ENCODE measurements at regions of chr17 and their contacts with region 1.

Region 1: GRCh38 chr17:39653662-39654331 is 11.4 kb upstream of the TCAP start:
- DNase-seq: peak; percentile 93
- ATAC-seq: peak; percentile 46
- H3K4me3 Mint-ChIP-seq: no peak overlapping the region
- H3K27ac Mint-ChIP-seq: no peak overlapping the region; the same call in 1 of the 2 replicates
- H3K4me1 Mint-ChIP-seq: peaks cover 46% of the 10 kb centered on the region
- H3K27me3 Mint-ChIP-seq: no peaks in the 10 kb centered on the region
- CTCF ChIP-seq: peak; percentile 92

Region 2: GRCh38 chr17:39547713-39548478 is 105.9 kb before region 1 on chr17:
- CTCF ChIA-PET with region 1: interaction called, 13 read pairs
- POLR2A ChIA-PET with region 1: no interaction called
- DNase-seq: peak; percentile 88
- ATAC-seq: peak; percentile 91
- H3K4me3 Mint-ChIP-seq: no peak overlapping the region
- H3K27ac Mint-ChIP-seq: no peak overlapping the region; the same call in 1 of the 2 replicates
- H3K4me1 Mint-ChIP-seq: no peaks in the 10 kb centered on the region
- H3K27me3 Mint-ChIP-seq: no peaks in the 10 kb centered on the region; the same call in 1 of the 2 replicates
- CTCF ChIP-seq: peak; percentile 94

Region 3: GRCh38 chr17:39612291-39612894 is 41.4 kb before region 1 on chr17:
- CTCF ChIA-PET with region 1: interaction called, 851 read pairs
- POLR2A ChIA-PET with region 1: no interaction called
- DNase-seq: no peak
- ATAC-seq: no peak
- H3K4me3 Mint-ChIP-seq: no peak overlapping the region
- H3K27ac Mint-ChIP-seq: no peak overlapping the region
- H3K4me1 Mint-ChIP-seq: peaks cover 8% of the 10 kb centered on the region
- H3K27me3 Mint-ChIP-seq: peaks cover 91% of the 10 kb centered on the region
- CTCF ChIP-seq: no peak

Region 4: DNA sequence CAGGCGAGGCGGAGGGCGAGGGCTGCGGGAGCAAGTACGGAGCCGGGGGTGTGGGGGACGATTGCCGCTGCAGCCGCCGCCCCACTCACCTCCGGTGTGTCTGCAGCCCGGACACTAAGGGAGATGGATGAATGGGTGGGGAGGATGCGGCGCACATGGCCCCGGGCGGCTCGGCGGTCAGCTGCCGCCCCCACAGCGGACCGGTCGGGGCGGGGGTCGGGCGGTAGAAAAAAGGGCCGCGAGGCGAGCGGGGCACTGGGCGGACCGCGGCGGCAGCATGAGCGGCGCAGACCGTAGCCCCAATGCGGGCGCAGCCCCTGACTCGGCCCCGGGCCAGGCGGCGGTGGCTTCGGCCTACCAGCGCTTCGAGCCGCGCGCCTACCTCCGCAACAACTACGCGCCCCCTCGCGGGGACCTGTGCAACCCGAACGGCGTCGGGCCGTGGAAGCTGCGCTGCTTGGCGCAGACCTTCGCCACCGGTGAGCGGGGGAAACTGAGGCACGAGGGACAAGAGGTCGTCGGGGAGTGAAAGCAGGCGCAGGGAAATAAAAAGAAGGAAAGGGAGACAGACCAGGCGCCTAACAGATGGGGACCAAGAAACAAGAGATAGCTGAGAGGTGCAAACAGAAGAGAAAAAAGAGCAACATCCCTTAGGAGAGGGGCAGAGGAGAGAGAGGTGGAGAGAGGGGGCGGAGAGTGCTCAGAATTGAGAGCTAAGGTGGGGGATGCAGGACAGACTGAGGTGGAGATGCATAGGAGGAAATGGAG is 14.6 kb after region 1 on chr17 and contains the start of gene PNMT:
- CTCF ChIA-PET with region 1: interaction called, 272 read pairs
- POLR2A ChIA-PET with region 1: interaction called, 4 read pairs
- DNase-seq: peak; percentile 83
- ATAC-seq: peak; percentile 34
- H3K4me3 Mint-ChIP-seq: peak within 1 kb of the TSS; percentile 71
- H3K27ac Mint-ChIP-seq: no peak within 1 kb of the TSS
- H3K4me1 Mint-ChIP-seq: peaks cover 48% of the 10 kb centered on the region
- H3K27me3 Mint-ChIP-seq: peaks cover 47% of the 10 kb centered on the region
- CTCF ChIP-seq: peak; percentile 26; the same call in 1 of the 2 replicates
- total RNA-seq, gene PNMT: 2.4 to 3.1 TPM (median 2.7 TPM) in 3 replicates

Region 5: DNA sequence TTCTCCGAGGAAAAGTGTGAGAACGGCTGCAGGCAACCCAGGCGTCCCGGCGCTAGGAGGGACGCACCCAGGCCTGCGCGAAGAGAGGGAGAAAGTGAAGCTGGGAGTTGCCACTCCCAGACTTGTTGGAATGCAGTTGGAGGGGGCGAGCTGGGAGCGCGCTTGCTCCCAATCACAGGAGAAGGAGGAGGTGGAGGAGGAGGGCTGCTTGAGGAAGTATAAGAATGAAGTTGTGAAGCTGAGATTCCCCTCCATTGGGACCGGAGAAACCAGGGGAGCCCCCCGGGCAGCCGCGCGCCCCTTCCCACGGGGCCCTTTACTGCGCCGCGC is 46.0 kb after region 1 on chr17 and contains the start of gene ERBB2:
- CTCF ChIA-PET with region 1: interaction called, 17 read pairs
- POLR2A ChIA-PET with region 1: interaction called, 5 read pairs
- DNase-seq: peak; percentile 73
- ATAC-seq: peak; percentile 43
- H3K4me3 Mint-ChIP-seq: peak within 1 kb of the TSS; percentile 95
- H3K27ac Mint-ChIP-seq: peak within 1 kb of the TSS; percentile 96
- H3K4me1 Mint-ChIP-seq: peaks cover 73% of the 10 kb centered on the region
- H3K27me3 Mint-ChIP-seq: no peaks in the 10 kb centered on the region
- CTCF ChIP-seq: no peak
- total RNA-seq, gene ERBB2: 153 to 209 TPM (median 158 TPM) in 3 replicates

Region 6: GRCh38 chr17:39754161-39754951 is 100.6 kb after region 1 on chr17:
- CTCF ChIA-PET with region 1: interaction called, 28 read pairs
- POLR2A ChIA-PET with region 1: interaction called, 3 read pairs
- DNase-seq: peak; percentile 81
- ATAC-seq: peak; percentile 64
- H3K4me3 Mint-ChIP-seq: peak overlapping the region; percentile 42
- H3K27ac Mint-ChIP-seq: no peak overlapping the region
- H3K4me1 Mint-ChIP-seq: peaks cover 57% of the 10 kb centered on the region
- H3K27me3 Mint-ChIP-seq: peaks cover 19% of the 10 kb centered on the region
- CTCF ChIP-seq: peak; percentile 98

Measured in WTC11 (cell line).